HEK293 (cell line): ENCODE measurements at regions of chr2 and their contacts with region 1.

Region 1: GRCh38 chr2:207540431-207540830 is 10.7 kb downstream of the CREB1 start:
- H3K4me3 ChIP-seq: no peak overlapping the region
- H3K27ac ChIP-seq: no peak overlapping the region
- H3K4me1 ChIP-seq: no peaks in the 10 kb centered on the region
- CTCF ChIP-seq: no peak

Region 2: GRCh38 chr2:208240619-208241209 is 700.3 kb after region 1 on chr2:
- CTCF ChIA-PET with region 1: no interaction called
- POLR2A ChIA-PET with region 1: interaction called, 13 read pairs
- H3K4me3 ChIP-seq: no peak overlapping the region
- H3K27ac ChIP-seq: no peak overlapping the region
- H3K4me1 ChIP-seq: no peaks in the 10 kb centered on the region
- CTCF ChIP-seq: no peak